Activated naive CD4-positive, alpha-beta T cell treated with anti-CD3 and anti-CD28 coated beads, Interleukin-2, amount 10 ng/mL, durations not matched to agents 7 days and 5 days (primary cell): ENCODE measurements at regions of chr4 and their contacts with region 1.

Region 1: DNA sequence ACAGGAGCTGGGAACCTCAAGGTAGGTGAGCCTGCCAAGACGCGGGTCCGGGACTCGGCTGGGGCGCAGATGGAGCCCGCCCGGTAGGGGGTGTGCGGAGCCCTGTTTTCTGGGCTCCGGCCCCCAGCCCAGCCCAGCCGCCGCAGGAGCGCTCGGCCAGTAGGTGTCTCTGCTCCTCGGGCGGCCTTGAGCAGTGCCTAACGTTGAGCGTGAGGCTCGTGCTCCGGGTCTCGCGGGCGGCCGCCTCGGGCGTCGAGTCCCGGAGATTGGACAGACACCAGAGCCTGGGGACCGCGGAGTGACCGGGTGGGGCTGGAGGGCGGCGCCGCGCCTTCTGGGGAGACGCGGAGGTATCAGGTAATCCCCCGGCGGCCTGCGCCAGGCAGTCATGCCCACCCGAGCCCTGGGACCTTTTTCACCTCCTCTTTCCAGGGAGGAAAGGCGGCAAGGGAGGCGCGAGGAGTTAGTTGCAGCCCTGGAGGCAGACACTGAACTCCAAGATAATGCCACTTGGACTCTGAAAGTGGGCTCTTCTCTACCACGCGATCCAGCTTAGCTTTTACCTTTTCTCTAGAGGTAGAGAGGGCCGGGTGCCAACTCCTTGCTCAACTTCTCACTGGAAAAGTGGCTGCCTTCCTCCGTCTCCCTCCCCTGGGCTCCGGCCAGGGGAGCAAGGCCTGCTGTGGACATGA is 14.5 kb upstream of the FGG start:
- DNase-seq: peak; percentile 69
- H3K4me3 Mint-ChIP-seq: no peak overlapping the region
- H3K27ac Mint-ChIP-seq: no peak overlapping the region
- H3K4me1 Mint-ChIP-seq: no peaks in the 10 kb centered on the region
- H3K27me3 Mint-ChIP-seq: peaks cover 11% of the 10 kb centered on the region

Region 2: GRCh38 chr4:154465085-154465484 is 161.9 kb before region 1 on chr4:
- CTCF ChIA-PET with region 1: no interaction called
- DNase-seq: no peak
- H3K4me3 Mint-ChIP-seq: no peak overlapping the region
- H3K27ac Mint-ChIP-seq: no peak overlapping the region
- H3K4me1 Mint-ChIP-seq: no peaks in the 10 kb centered on the region
- H3K27me3 Mint-ChIP-seq: peaks cover 10% of the 10 kb centered on the region

Region 3: DNA sequence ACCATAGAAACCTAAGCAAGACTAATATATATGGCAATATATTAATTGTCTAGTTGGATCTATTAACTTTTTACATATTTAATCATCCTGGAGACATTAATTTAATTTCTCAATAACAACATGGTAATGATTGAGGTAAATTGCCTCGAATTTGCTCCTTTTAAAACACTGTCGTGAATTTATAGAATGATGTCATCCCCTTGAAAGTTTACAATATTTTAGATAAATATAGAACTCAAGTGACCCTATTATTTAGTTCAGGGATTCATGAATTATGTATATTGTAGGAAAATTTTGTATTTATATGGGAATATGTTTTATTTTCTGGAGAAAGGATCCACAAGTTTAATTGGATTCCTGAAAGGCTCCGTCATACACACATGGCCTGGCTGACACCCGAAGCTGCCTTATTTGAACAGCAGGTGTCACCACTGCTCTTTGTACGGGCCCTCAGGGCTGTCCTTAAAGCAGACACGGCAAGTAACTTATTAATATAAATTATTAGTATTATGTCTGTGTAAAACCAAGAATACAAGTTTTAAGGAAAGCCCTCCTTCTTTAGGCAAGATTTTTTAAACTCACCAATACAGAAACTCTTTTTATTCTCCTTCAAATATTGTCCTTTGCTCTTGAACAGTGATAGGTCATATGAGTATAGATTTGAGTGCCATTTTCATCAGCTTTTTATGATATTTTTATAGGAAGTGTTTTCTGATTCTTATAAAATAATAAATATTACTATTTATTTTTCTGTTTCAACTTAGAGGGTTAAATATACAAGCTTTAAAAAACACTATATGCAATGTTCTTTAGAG is 74.9 kb before region 1 on chr4:
- CTCF ChIA-PET with region 1: interaction called, 95 read pairs
- DNase-seq: peak; percentile 80
- H3K4me3 Mint-ChIP-seq: no peak overlapping the region
- H3K27ac Mint-ChIP-seq: no peak overlapping the region
- H3K4me1 Mint-ChIP-seq: peaks cover 28% of the 10 kb centered on the region
- H3K27me3 Mint-ChIP-seq: no peaks in the 10 kb centered on the region